ENCODE measurements at regions of chr16 and their contacts with region 1.

Region 1: DNA sequence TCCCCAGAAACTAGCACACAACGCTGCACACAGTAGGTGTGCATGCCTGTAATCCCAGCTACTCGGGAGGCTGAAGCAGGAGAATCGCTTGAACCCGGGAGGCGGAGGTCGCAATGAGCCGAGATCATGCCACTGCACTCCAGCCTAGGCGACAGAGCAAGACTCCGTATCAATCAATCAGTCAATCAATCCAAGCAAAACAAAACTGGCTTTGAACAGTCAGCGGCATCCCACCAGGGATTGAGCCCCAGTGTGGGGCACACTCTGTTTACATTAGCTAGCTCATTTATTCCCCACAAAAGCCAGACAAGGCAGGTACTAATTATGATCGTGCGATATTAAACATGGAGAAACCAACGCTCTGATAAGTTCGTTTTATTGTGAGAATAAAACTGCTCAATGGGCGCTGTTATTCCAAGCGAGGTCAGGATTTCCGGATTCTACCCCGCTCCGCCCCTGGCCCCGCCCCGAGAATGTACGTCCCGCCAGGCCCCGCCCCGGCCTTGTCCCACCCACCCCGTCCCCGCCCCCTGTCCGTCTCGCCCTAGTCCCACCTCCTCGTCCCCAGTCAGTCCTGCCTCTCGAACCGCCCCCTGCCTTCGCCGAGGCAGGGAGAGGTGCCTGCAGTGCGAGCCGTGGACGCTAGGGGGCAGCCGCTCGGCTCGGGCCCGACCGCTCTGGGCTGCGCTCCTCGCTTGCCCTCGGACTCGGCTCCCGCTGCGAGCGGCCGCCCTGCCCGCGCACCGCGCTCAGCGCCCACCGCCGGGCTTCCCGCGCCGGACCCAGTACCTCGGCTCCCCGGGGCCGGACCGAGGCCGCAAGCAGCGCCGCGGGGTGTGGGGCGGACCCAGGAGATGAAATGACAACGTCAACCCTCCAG is at the start of gene VPS4A:
- DNase-seq: peak; percentile 96 to 99 (median 97)
- H3K4me3 ChIP-seq: peak within 1 kb of the TSS; percentile 70 to 73
- H3K4me3 Mint-ChIP-seq: peak within 1 kb of the TSS; percentile 93 to 99 (median 98)
- H3K27ac ChIP-seq: peak within 1 kb of the TSS; percentile 85
- H3K27ac Mint-ChIP-seq: peak within 1 kb of the TSS; percentile 85 to 98 (median 95)
- H3K4me1 ChIP-seq: peaks cover 28% of the 10 kb centered on the region
- H3K4me1 Mint-ChIP-seq: peaks cover 16 to 36% (median 27%) of the 10 kb centered on the region in 4 donors
- H3K27me3 ChIP-seq: no peaks in the 10 kb centered on the region
- H3K27me3 Mint-ChIP-seq: no peaks in the 10 kb centered on the region
- total RNA-seq, gene VPS4A: 46.7 to 48.3 TPM

Region 2: GRCh38 chr16:69330286-69331109 is 19.6 kb after region 1 on chr16 and contains the start of gene PDF:
- CTCF ChIA-PET with region 1: interaction called, 6 read pairs
- POLR2A ChIA-PET with region 1: interaction called, 44 read pairs
- intact Hi-C with region 1: loop called (anchors 1 kb)
- DNase-seq: peak; percentile 72 to 82 (median 78)
- H3K4me3 ChIP-seq: peak within 1 kb of the TSS; percentile 36 to 73
- H3K4me3 Mint-ChIP-seq: peak within 1 kb of the TSS; percentile 77 to 87 (median 82)
- H3K27ac ChIP-seq: peak within 1 kb of the TSS; percentile 83
- H3K27ac Mint-ChIP-seq: peak within 1 kb of the TSS; percentile 49 to 90 (median 88)
- H3K4me1 ChIP-seq: peaks cover 49% of the 10 kb centered on the region
- H3K4me1 Mint-ChIP-seq: peaks cover 27 to 58% (median 43%) of the 10 kb centered on the region in 4 donors
- H3K27me3 ChIP-seq: no peaks in the 10 kb centered on the region
- H3K27me3 Mint-ChIP-seq: no peaks in the 10 kb centered on the region
- total RNA-seq, gene PDF: 11.8 TPM

Region 3: DNA sequence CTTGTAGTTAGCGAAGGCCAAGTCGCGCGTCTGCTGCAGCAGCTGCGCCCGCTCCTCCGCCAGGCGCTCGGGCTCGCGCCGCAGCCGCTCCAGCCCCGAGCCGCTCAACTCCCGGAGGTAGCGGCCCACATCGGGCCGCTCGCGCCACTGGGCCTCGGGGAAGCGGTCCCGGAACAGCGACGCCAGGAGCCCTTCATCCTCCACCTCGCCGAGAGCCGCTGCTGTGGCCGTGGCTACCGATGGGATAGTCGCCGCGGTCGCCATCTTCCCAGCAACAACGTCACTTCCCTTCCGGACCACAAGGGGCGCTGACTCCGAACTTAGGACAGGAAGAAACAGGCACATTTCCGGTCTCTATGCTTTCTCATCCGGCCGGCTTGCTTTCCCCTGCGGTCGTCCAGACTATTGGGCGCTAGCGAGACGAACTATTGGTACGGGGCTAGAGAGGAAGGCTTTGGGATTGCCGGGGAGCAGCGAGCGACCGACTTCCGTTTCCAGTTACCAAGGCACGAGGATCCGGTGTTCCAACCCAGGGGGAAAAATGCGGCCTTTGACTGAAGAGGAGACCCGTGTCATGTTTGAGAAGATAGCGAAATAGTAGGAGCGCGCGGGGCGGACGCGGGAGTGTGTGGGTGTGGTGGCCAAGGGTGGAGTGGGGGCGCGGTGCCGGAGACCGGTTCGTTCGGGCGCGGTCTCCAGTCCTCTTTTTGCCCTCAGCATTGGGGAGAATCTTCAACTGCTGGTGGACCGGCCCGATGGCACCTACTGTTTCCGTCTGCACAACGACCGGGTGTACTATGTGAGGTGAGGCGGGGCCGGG is 28.6 kb after region 1 on chr16 and contains the starts of genes COG8 and NIP7:
- CTCF ChIA-PET with region 1: interaction called, 5 read pairs
- POLR2A ChIA-PET with region 1: interaction called, 30 read pairs
- intact Hi-C with region 1: loop called (anchors 1 kb)
- DNase-seq: peak; percentile 90 to 94 (median 91)
- H3K4me3 ChIP-seq: peak within 1 kb of the TSS; percentile 77 to 97
- H3K4me3 Mint-ChIP-seq: peak within 1 kb of the TSS; percentile 96 to 100 (median 100)
- H3K27ac ChIP-seq: peak within 1 kb of the TSS; percentile 81
- H3K27ac Mint-ChIP-seq: peak within 1 kb of the TSS; percentile 96 to 100 (median 99)
- H3K4me1 ChIP-seq: peaks cover 39% of the 10 kb centered on the region
- H3K4me1 Mint-ChIP-seq: peaks cover 34 to 74% (median 51%) of the 10 kb centered on the region in 4 donors
- H3K27me3 ChIP-seq: no peaks in the 10 kb centered on the region
- H3K27me3 Mint-ChIP-seq: no peaks in the 10 kb centered on the region
- total RNA-seq, gene COG8: 66.0 to 66.1 TPM
- total RNA-seq, gene NIP7: 30.9 to 31.9 TPM

Region 4: GRCh38 chr16:69386596-69386995 is 75.7 kb after region 1 on chr16:
- CTCF ChIA-PET with region 1: no interaction called
- POLR2A ChIA-PET with region 1: interaction called, 3 read pairs
- intact Hi-C with region 1: loop called (anchors 1 kb)
- DNase-seq: no peak
- H3K4me3 ChIP-seq: no peak overlapping the region
- H3K4me3 Mint-ChIP-seq: peak overlapping the region in 6 of 8 donors; percentile 48 to 98 (median 91)
- H3K27ac ChIP-seq: peak overlapping the region; percentile 81
- H3K27ac Mint-ChIP-seq: peak overlapping the region in 5 of 7 donors; percentile 59 to 98 (median 96)
- H3K4me1 ChIP-seq: peaks cover 30% of the 10 kb centered on the region
- H3K4me1 Mint-ChIP-seq: peaks cover 17 to 41% (median 27%) of the 10 kb centered on the region in 4 donors
- H3K27me3 ChIP-seq: no peaks in the 10 kb centered on the region
- H3K27me3 Mint-ChIP-seq: no peaks in the 10 kb centered on the region

Region 5: GRCh38 chr16:69397821-69398521 is 87.1 kb after region 1 on chr16:
- CTCF ChIA-PET with region 1: no interaction called
- POLR2A ChIA-PET with region 1: no interaction called
- intact Hi-C with region 1: no loop called
- DNase-seq: no peak
- H3K4me3 ChIP-seq: no peak overlapping the region
- H3K4me3 Mint-ChIP-seq: no peak overlapping the region
- H3K27ac ChIP-seq: no peak overlapping the region
- H3K27ac Mint-ChIP-seq: no peak overlapping the region
- H3K4me1 ChIP-seq: peaks cover 4% of the 10 kb centered on the region
- H3K4me1 Mint-ChIP-seq: peaks cover 0 to 6% (median 5%) of the 10 kb centered on the region in 4 donors
- H3K27me3 ChIP-seq: no peaks in the 10 kb centered on the region
- H3K27me3 Mint-ChIP-seq: peaks cover 0 to 3% of the 10 kb centered on the region in 2 donors